Motor neuron (in vitro differentiated cells): ENCODE measurements at regions of chr16 and their contacts with region 1.

Region 1: DNA sequence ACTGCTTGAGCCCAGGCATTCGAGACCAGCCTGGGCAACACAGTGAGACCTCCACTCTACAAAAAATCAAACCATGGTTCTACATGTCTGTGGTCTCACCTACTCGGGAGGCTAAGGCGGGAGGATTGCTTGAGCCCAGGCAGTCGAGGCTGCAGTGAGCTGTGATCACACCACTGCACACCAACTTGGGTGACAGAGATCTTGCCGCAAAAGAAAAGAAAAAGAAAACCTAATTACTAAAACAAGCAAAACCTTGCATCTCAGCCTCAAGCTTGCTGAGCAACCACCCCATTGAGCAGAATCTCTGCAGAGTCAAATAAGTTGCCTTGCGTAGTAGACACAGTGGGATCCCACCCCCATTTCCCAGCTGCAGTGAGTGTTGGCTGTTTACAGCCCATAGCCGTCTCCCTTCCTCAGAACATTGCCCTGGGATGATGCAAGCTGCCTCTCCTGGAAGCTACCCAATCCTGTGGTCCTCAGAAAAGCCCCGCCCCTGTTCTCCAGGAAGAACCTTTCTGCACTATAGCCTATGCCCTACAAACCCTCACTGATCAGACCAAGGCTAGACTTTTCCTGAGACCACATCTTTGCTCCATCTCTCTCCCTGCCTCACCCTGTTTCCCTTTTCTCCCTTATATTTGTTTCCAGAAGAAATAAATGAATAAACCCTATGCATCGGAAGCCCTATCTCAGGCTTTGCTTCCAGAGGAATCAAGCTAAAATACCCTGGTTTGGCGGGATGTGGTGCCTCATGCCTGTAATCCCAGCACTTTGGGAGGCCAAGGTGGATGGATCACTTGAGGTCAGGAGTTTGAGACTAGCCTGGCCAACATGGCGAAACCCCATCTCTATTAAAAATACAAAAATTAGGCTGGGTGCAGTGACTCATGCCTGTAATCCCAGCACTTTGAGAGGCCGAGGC is 16.7 kb upstream of the ERN2 start:
- ATAC-seq: peak in 5 of 8 experiments; percentile 23 to 76 (median 43)
- H3K4me3 ChIP-seq: no peak overlapping the region
- H3K27ac ChIP-seq: no peak overlapping the region
- H3K4me1 ChIP-seq: no peaks in the 10 kb centered on the region

Region 2: DNA sequence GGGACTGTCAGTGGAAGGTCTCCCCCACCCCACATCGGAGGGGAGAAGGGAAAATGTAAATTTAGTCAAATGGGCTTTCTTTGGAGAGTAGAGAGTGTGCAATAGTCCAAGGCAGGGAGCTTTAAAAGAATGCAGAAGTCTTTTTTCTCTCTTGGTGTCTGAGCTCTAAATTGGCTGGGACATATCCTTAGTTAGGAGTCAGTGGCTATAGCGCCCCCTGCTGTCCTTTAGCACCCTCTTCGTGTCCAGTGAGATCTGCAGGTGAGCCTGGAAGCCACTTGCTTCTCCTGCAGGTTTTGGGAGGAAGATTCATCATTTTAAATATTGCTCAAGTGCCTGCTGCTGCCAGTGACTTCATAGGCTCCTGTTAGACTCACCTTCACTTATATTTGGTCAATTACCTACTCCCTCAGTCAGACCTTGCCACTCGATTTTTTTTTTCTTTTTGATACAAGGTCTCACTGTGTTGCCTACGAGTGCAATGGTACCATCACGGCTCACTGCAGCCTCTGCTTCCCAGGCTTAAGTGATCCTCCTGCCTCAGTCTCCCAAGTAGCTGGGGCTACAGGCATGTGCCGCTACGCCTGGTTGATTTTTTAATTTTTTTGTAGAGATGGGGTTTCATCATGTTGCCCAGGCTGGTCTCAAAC is 280.8 kb after region 1 on chr16:
- in situ Hi-C with region 1: loop called in 2 of 9 experiments (anchors 25 kb)
- ATAC-seq: peak; percentile 54 to 91 (median 76)
- H3K4me3 ChIP-seq: no peak overlapping the region
- H3K27ac ChIP-seq: no peak overlapping the region
- H3K4me1 ChIP-seq: no peaks in the 10 kb centered on the region

Region 3: DNA sequence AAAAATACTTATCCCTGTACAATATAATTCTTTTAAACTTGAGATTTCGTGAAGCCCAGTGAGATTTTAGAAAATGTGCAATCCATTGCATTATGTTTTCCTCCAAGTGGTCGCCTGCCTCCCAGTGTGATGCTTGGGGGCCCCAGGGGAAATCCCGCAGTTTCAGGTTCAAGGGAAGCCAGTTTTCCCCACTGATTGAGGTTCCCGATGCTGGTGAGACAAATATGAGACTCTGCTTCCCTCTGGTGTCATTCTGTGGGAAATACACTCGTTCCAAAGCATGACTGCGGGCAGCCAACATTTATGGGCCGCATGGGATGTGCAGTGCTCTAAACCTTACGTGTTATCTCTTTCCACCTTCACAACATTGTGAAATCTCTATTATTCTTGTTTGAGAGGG is 306.9 kb after region 1 on chr16:
- in situ Hi-C with region 1: loop called in 2 of 9 experiments (anchors 10 to 25 kb)
- ATAC-seq: peak; percentile 59 to 92 (median 82)
- H3K4me3 ChIP-seq: no peak overlapping the region
- H3K27ac ChIP-seq: no peak overlapping the region
- H3K4me1 ChIP-seq: peaks cover 5 to 7% of the 10 kb centered on the region in 2 donors

Region 4: GRCh38 chr16:24041826-24042631 is 312.3 kb after region 1 on chr16:
- in situ Hi-C with region 1: loop called in 2 of 9 experiments (anchors 10 to 25 kb)
- ATAC-seq: peak; percentile 35 to 92 (median 54)
- H3K4me3 ChIP-seq: no peak overlapping the region
- H3K27ac ChIP-seq: no peak overlapping the region
- H3K4me1 ChIP-seq: no peaks in the 10 kb centered on the region